Activated T-helper 2 cell treated with anti-CD3 and anti-CD28 coated beads, Interferon-gamma antibody, Interleukin-2, Interleukin-4, amounts not matched to agents 10 μg/mL and 5 μg/mL and 100 μg/mL, durations not matched to agents 14 hours and 24 hours and 36 hours (primary cell): ENCODE measurements at regions of chr1 and their contacts with region 1.

Region 1: DNA sequence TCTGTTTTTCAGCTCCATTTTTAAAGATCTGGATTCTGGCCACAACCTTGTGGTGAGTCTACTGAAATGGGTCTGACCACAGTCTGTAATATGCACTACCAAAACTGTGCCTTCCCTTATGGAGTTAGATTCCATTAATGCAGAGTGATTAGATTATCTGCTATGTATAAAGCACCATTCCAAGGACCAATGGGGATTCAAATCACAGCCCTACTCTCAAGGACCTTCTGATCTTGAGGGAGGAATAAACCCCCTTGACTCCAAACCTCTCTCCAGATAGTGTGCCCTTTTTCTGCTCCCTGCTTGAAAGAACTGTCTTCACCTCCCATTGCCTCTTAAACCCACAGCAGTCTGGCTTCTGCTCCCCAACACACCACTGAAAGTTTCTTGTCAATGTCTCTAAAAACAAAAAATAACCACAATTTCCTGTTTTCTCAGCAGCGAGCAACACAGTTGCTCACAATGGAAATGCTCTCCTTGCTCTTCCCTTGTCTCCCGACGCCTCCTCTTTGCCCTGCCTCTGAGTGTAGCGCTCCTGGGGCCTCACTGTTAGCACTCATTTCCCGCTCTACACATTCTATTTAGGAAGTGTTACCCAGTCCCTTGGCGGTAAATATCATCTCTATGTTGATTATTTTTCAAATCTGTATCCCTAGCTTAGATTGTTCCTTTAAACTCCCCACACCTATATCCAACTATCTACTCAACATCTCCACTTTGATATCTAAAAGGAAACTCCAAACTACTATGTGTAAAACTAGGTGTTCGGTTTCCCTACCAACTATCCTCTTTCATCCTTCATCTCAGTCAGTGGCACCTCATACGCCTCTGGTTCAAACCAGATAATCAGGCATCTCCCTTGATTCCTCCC is 13.6 kb downstream of the PCNX2 start:
- DNase-seq: peak; percentile 36
- H3K4me3 Mint-ChIP-seq: peak overlapping the region; percentile 32
- H3K27ac Mint-ChIP-seq: peak overlapping the region; percentile 47
- H3K4me1 Mint-ChIP-seq: peaks cover 34% of the 10 kb centered on the region
- H3K27me3 Mint-ChIP-seq: no peaks in the 10 kb centered on the region

Region 2: DNA sequence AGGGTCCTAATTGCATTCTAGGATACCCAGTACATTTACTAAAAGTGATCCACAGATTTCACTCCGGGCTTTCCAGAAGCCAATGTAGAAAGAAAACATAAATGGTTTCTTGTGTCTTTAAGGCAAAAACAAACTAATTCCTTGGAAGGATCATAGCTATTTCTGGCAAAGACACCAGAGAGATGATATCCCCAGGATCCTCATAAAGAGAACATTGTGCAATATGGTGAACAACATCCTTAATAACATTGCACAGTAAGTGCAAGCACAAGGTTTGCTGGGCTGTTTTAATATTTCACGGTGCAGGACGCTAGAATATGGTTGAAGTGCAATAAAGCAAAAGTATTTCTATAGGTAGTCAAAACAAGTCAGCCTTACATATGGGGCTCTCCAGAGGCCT is 248.6 kb before region 1 on chr1:
- intact Hi-C with region 1: no loop called
- DNase-seq: no peak
- H3K4me3 Mint-ChIP-seq: no peak overlapping the region
- H3K27ac Mint-ChIP-seq: no peak overlapping the region
- H3K4me1 Mint-ChIP-seq: peaks cover 8% of the 10 kb centered on the region
- H3K27me3 Mint-ChIP-seq: no peaks in the 10 kb centered on the region

Region 3: DNA sequence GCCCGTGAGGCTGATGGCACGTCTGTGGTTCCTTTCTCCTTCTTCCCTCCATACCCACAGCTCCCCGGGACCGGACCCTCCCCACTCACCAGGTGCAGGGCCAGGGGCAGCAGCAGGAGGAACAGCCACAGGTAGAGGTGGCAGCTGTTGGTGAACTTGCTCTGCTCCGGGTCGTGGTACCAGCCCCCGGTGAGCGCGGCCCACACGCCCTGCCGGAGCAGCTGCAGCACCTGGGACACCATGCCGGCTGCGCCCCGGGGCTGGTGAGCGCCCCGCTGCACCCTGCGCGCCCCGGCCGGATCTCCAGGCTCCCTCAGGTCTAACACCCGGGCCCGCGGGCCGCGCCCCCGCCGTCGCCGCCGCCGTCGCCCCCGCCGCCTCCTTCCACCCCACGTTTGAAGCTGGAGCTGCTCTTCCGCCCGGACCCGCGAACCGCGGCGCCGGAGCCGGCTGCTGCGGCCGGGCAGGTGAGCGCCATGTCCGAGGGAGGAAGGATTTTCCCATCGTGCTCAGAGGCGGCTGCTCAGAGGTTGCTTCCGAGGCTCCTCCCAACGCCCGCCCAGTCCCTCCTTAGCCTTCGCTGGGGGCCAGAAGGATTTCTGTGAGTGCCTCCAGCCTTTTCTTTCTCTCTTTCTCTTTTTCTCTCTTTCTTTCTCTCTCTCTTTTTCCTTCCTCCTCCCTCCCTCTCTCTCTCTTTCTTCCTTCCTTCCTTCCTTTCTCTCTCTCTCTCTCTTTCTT is 13.5 kb after region 1 on chr1 and contains the start of gene PCNX2:
- intact Hi-C with region 1: loop called (anchors 1 kb)
- DNase-seq: peak; percentile 44
- H3K4me3 Mint-ChIP-seq: peak within 1 kb of the TSS; percentile 94
- H3K27ac Mint-ChIP-seq: peak within 1 kb of the TSS; percentile 86
- H3K4me1 Mint-ChIP-seq: peaks cover 25% of the 10 kb centered on the region
- H3K27me3 Mint-ChIP-seq: no peaks in the 10 kb centered on the region
- total RNA-seq, gene PCNX2: 12.8 and 16.0 TPM in 2 replicates

Region 4: DNA sequence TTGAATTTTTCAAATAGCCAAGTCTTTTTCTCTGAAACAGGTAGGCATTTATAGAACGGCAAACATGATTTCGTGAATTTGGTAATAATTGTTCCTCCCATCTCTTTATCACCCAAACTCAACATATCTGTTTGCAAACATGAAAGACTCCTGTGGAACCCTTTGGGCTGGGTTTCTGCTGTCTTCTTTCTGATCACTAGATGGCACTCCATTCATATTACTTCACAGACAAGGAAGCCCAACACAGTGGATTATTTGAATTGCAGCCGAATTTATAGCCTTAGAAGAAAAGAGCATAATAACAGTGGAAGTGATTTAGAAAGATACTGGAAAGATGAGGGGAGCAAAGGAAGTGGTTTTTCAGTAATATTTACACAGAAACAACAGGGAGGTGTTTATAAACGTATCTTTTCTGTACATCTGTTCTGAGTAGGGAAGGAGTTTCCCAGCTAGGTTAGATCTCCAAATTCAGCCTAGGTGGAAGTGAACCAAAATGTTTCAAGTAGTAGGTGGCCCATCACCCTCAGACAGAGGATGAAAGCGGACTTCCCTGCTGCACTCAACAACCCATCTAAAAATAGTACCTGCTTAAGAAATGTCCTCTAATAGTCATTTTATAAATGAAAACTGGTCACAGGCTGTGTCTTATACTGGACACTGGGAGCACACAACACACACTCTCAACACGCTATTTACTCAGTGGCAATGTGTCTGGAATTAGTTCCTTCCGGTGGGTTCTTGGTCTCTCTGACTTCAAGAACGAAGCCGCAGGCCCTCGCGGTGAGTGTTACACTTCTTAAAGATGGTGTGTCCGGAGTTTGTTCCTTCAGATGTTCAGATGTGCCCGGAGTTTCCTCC is 113.1 kb after region 1 on chr1:
- intact Hi-C with region 1: no loop called
- DNase-seq: no peak
- H3K4me3 Mint-ChIP-seq: no peak overlapping the region
- H3K27ac Mint-ChIP-seq: no peak overlapping the region
- H3K4me1 Mint-ChIP-seq: no peaks in the 10 kb centered on the region
- H3K27me3 Mint-ChIP-seq: peaks cover 21% of the 10 kb centered on the region